Esophagus muscularis mucosa (tissue), 4 donors: ENCODE measurements at regions of chr5 and their contacts with region 1.

Region 1: GRCh38 chr5:149497357-149497756 is 53.9 kb downstream of the CSNK1A1 start:
- DNase-seq: no peak
- H3K4me3 ChIP-seq: no peak overlapping the region
- H3K27ac ChIP-seq: peak overlapping the region; percentile 73 to 93 (median 76)
- H3K4me1 ChIP-seq: peaks cover 7 to 70% (median 46%) of the 10 kb centered on the region in 4 donors
- H3K27me3 ChIP-seq: no peaks in the 10 kb centered on the region
- CTCF ChIP-seq: no peak
- EP300 ChIP-seq: no peak
- POLR2A ChIP-seq: no peak

Region 2: DNA sequence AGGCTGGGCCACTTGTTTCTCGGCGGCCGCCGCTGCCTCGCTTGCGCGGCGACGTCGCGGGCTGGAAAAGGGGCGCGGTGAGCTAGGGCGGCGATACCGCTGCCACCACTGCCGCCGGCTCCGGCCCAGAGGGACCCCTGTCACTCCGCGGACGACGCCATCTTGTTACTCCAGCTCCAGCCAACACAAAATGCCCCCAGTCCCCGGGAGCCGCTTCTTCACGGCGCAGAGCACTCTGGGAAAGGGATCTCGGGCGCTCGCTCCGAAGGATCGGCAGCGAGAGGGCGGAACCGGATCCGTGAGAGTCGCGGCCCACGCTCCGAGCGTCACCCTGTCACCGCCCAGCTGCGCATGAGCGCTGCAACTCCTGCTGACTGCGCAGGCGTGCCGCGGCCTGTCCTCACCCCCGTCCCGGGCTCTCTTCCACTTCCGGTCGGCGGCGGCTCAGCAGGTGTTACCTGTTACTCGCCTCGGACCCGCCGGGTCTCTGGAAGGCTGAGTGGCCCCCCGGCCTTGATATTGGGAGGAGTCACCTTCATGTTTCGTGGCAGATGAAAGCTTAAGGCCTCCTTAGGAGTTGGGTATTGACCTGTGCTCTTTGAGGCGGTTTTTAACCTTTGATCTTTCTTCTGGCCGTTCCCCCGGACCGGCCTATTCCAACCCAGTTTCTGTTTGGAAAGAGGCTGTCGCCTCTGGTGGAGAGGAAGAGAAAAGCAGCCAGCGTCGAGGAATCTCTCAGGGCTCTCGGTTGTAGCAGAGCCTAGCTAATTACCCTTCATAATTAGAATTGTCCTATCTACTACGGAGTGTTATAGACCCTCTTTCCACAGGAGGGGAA is 54.1 kb after region 1 on chr5 and contains the start of gene CSNK1A1:
- intact Hi-C with region 1: loop called (anchors 5 kb)
- DNase-seq: peak; percentile 99
- H3K4me3 ChIP-seq: peak within 1 kb of the TSS; percentile 84 to 97 (median 95)
- H3K27ac ChIP-seq: peak within 1 kb of the TSS; percentile 99
- H3K4me1 ChIP-seq: peaks cover 27 to 38% (median 32%) of the 10 kb centered on the region in 4 donors
- H3K27me3 ChIP-seq: no peaks in the 10 kb centered on the region
- CTCF ChIP-seq: peak; percentile 89 to 90 (median 89)
- EP300 ChIP-seq: no peak
- POLR2A ChIP-seq: peak; percentile 77
- total RNA-seq, gene CSNK1A1: 283 to 347 (median 336) TPM